ENCODE measurements at regions of chr4 and their contacts with region 1.

Region 1: DNA sequence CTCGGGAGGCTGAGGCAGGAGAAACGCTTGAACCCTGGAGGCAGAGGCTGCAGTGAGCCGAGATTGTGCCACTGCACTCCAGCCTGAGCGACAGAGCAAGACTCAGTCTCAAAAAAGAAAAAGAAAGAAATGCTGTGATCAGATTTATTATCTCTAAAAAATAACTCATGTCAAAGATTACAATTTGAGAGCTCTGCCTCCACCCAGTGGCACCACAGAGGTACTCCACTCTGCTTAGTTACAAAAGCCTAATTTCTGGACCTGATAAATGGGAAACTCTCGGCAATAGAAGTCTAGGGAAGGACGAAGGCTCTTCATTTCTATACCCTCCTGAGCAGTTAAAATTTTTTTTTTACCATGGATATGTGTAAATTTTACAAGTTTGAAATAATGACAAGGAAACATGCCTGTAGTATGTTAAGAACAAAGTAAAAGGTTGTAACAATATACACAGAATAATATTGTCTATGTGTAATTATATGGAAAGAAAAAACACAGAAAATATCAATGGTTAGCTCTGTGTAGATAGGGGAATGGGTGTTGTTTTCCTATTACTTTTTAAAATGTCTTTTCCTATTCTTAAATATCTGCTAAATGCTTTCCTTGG is 149.8 kb downstream of the STIM2 start:
- DNase-seq: peak; percentile 26
- H3K4me3 Mint-ChIP-seq: no peak overlapping the region
- H3K27ac Mint-ChIP-seq: no peak overlapping the region
- H3K4me1 Mint-ChIP-seq: peaks cover 9% of the 10 kb centered on the region
- H3K27me3 Mint-ChIP-seq: no peaks in the 10 kb centered on the region

Region 2: DNA sequence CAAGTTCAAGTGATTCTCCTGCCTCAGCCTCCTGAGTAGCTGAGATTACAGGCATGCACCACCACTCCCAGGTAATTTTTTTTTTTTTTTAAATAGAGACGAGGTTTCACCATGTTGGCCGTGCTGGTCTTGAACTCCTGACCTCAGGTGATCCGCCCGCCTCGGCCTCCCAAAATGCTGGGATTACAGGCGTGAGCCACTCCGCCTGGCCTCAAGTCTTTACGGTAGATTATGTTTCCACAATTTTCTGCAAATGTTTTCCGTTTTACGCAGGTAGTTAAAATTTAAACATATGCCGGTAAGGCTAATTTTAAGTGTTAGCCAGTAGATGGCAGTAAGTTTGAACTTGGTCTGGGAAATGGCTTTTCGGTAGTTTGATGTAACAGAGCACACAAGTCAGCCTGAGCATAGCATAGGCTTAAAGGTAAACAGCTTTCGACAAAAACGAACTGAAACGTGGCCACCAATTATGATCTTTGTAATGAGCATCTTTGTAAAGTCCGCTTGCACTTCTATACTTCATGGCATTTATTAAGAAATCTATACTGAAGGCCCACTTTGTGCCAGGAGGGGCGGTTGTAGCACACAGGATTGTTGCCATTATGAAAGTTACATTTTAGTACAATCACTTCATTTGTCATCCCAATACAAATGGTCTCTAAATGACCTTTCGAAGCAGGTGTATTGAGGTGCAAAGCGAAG is 551.2 kb before region 1 on chr4:
- intact Hi-C with region 1: loop called (anchors 1 kb)
- DNase-seq: no peak
- H3K4me3 Mint-ChIP-seq: no peak overlapping the region
- H3K27ac Mint-ChIP-seq: no peak overlapping the region
- H3K4me1 Mint-ChIP-seq: peaks cover 12% of the 10 kb centered on the region
- H3K27me3 Mint-ChIP-seq: peaks cover 11% of the 10 kb centered on the region

Region 3: GRCh38 chr4:26731351-26732035 is 278.9 kb before region 1 on chr4:
- intact Hi-C with region 1: loop called (anchors 5 kb)
- DNase-seq: no peak
- H3K4me3 Mint-ChIP-seq: no peak overlapping the region
- H3K27ac Mint-ChIP-seq: no peak overlapping the region
- H3K4me1 Mint-ChIP-seq: peaks cover 11% of the 10 kb centered on the region
- H3K27me3 Mint-ChIP-seq: peaks cover 4% of the 10 kb centered on the region

Region 4: GRCh38 chr4:26860157-26860921 is 150.1 kb before region 1 on chr4 and contains the start of gene STIM2:
- intact Hi-C with region 1: no loop called
- DNase-seq: peak; percentile 99
- H3K4me3 Mint-ChIP-seq: peak within 1 kb of the TSS; percentile 93
- H3K27ac Mint-ChIP-seq: peak within 1 kb of the TSS; percentile 95
- H3K4me1 Mint-ChIP-seq: peaks cover 52% of the 10 kb centered on the region
- H3K27me3 Mint-ChIP-seq: peaks cover 4% of the 10 kb centered on the region
- total RNA-seq, gene STIM2: 35.5 and 37.1 TPM in 2 replicates

Region 5: DNA sequence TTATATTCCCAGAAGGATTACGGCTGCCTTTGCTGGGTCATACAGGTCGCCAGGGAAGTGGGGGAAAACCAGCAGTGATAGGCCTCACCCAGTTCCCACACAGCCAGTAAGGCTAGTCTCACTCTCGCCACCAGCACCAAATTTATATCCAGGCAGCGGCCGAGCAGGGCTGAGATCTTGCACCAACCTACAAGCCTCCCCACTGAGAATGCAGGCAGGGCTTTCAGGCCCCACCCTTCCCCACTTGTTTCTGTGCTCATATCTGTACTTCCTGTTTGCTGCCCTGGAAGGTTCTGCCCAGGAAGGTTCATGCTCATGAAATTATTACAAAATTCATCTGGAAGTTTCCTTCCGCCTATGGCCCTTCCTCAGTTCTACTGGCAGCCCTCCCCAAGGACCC is 29.9 kb after region 1 on chr4:
- intact Hi-C with region 1: no loop called
- DNase-seq: no peak
- H3K4me3 Mint-ChIP-seq: no peak overlapping the region
- H3K27ac Mint-ChIP-seq: no peak overlapping the region
- H3K4me1 Mint-ChIP-seq: peaks cover 3% of the 10 kb centered on the region
- H3K27me3 Mint-ChIP-seq: peaks cover 12% of the 10 kb centered on the region

Region 6: DNA sequence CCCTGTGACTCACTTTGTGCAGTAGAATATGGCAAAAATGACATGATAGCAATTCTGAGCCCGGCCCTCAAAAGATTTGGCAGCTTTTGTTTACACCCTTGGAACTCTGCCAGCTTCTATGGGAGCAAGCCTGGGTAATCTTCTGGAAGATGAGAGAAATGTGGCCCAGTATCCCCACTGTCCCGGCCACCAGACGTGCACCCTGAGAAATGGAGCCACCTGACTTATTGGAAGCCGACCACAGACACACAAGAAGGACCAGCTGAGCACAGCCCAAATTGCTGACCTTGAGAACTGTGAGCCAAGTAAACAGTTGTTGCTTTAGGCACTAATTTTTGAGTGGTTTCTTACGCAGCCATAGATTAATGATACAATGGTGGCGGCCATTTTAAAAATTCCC is 47.2 kb after region 1 on chr4:
- intact Hi-C with region 1: no loop called
- DNase-seq: no peak
- H3K4me3 Mint-ChIP-seq: no peak overlapping the region
- H3K27ac Mint-ChIP-seq: no peak overlapping the region
- H3K4me1 Mint-ChIP-seq: no peaks in the 10 kb centered on the region
- H3K27me3 Mint-ChIP-seq: peaks cover 6% of the 10 kb centered on the region

Measured in activated T-helper 2 cell treated with anti-CD3 and anti-CD28 coated beads, Interferon-gamma antibody, Interleukin-2, Interleukin-4, amounts not matched to agents 10 μg/mL and 5 μg/mL and 100 μg/mL, durations not matched to agents 14 hours and 24 hours and 36 hours (primary cell).